Activated naive CD4-positive, alpha-beta T cell treated with anti-CD3 and anti-CD28 coated beads for 36 hours (primary cell): ENCODE measurements at regions of chr19 and their contacts with region 1.

Region 1: GRCh38 chr19:43503501-43504425 is 783 bp downstream of the PHLDB3 start:
- DNase-seq: peak; percentile 99
- H3K4me3 Mint-ChIP-seq: peak overlapping the region; percentile 97
- H3K27ac Mint-ChIP-seq: peak overlapping the region; percentile 92
- H3K4me1 Mint-ChIP-seq: peaks cover 29% of the 10 kb centered on the region
- H3K27me3 Mint-ChIP-seq: no peaks in the 10 kb centered on the region

Region 2: DNA sequence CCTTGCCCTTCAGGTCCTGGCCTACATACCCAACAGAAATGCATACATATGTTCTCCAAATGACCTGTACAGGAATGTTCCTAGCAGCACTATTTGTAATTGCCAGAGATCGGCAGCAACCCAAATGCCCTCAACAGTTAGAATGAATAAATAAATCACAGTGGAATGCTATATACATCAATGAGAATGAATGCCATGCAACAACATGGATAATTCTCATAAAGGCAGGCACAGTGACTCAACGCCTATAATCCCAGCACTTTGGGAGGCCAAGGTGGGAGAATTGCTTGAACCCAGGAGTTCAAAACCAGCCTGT is 70.4 kb before region 1 on chr19:
- CTCF ChIA-PET with region 1: interaction called, 11 read pairs
- intact Hi-C with region 1: loop called (anchors 1 kb)
- DNase-seq: no peak
- H3K4me3 Mint-ChIP-seq: no peak overlapping the region
- H3K27ac Mint-ChIP-seq: no peak overlapping the region
- H3K4me1 Mint-ChIP-seq: peaks cover 32% of the 10 kb centered on the region
- H3K27me3 Mint-ChIP-seq: no peaks in the 10 kb centered on the region

Region 3: GRCh38 chr19:43463381-43464136 is 40.2 kb before region 1 on chr19:
- CTCF ChIA-PET with region 1: interaction called, 3 read pairs
- intact Hi-C with region 1: loop called (anchors 1 kb)
- DNase-seq: peak; percentile 100
- H3K4me3 Mint-ChIP-seq: peak overlapping the region; percentile 94
- H3K27ac Mint-ChIP-seq: peak overlapping the region; percentile 86
- H3K4me1 Mint-ChIP-seq: peaks cover 37% of the 10 kb centered on the region
- H3K27me3 Mint-ChIP-seq: no peaks in the 10 kb centered on the region

Region 4: DNA sequence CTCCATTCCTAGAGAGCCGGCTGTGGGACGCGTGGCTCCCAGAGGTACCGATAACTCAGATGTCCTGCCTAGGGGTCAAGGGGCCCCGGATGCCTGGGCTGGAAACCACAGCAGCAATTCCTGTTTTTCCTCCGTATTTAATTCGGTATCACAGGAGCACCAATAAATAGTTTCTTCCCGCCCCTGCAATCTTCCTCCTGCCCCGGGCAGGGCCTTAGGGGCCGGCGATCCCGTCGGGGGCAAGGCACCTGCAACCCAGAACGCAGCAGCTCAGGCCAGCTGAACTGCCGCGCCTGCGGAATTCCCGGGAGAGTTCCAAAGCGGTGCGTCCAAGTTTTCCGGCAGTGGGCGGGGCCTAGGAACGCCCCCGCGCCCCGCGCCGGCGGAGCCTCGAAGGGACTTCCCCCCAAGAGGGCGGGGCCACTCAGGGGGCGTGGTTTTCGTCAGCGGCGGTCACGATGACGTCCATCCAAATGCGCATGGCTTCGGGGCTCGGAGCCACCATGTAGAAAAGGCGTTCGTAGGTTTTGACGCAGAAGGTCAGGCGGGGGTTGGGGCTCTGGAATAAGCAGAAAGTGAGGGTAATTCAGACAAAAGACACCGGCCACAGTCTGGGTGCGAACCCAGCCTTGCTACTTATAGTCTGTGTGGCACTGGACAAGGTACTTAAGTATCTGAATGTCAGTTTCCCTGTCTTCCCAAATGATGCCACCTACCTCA is 28.6 kb before region 1 on chr19:
- CTCF ChIA-PET with region 1: interaction called, 3 read pairs
- intact Hi-C with region 1: loop called (anchors 1 kb)
- DNase-seq: peak; percentile 97
- H3K4me3 Mint-ChIP-seq: peak overlapping the region; percentile 75
- H3K27ac Mint-ChIP-seq: peak overlapping the region; percentile 86
- H3K4me1 Mint-ChIP-seq: peaks cover 46% of the 10 kb centered on the region
- H3K27me3 Mint-ChIP-seq: no peaks in the 10 kb centered on the region

Region 5: GRCh38 chr19:43519436-43520088 is 15.8 kb after region 1 on chr19:
- CTCF ChIA-PET with region 1: interaction called, 11 read pairs
- intact Hi-C with region 1: loop called (anchors 1 kb)
- DNase-seq: peak; percentile 89
- H3K4me3 Mint-ChIP-seq: no peak overlapping the region
- H3K27ac Mint-ChIP-seq: peak overlapping the region; percentile 48
- H3K4me1 Mint-ChIP-seq: peaks cover 12% of the 10 kb centered on the region
- H3K27me3 Mint-ChIP-seq: no peaks in the 10 kb centered on the region

Region 6: DNA sequence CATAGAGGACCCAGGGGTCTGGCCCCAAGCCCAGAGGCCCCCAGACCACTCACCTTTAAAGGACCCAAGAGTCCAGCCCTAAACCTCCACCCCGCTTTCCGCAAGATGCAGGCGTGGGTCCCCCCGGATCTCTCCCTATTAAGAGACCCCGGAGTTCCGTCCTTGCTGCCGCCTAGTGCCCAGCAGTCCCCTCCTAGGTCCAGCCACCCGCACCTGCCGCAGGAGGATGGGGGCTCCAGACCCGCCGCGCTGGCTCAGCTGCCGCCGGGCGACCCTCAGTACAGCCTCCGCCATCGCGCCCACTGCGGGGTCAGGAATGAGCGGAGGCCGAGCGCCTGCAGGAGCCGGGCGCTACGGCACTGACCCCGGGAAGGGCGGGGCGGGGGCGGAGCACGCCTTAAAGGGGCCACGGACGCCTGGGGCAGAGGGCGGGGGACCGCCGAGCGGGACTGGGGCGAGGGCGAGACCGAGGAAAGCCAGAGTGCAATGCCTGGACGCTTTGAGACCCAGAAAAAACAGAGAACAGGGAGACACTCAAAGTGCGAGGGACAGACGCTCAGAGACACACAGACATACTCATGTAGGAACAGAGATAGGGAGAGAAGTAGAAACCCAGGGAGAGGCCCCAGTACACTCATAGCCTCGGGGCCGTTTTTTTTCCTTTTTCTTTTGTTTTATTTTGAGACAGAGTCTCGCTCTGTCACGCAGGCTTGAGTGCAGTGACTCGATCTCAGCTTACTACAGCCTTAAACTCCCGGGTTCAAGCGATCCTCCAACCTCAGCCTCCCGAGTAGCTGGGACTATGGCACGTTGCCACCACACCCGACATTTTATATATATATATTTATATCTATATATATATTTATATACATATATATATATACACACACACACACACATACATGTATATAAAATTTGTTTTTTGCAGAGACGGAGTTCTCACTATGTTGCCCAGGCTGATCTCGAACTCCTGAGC is 23.4 kb after region 1 on chr19 and contains the start of gene ETHE1:
- CTCF ChIA-PET with region 1: interaction called, 4 read pairs
- intact Hi-C with region 1: loop called (anchors 2 kb)
- DNase-seq: peak; percentile 73
- H3K4me3 Mint-ChIP-seq: peak within 1 kb of the TSS; percentile 97
- H3K27ac Mint-ChIP-seq: peak within 1 kb of the TSS; percentile 96
- H3K4me1 Mint-ChIP-seq: peaks cover 22% of the 10 kb centered on the region
- H3K27me3 Mint-ChIP-seq: no peaks in the 10 kb centered on the region
- total RNA-seq, gene ETHE1: 62.1 to 64.4 TPM

Region 7: DNA sequence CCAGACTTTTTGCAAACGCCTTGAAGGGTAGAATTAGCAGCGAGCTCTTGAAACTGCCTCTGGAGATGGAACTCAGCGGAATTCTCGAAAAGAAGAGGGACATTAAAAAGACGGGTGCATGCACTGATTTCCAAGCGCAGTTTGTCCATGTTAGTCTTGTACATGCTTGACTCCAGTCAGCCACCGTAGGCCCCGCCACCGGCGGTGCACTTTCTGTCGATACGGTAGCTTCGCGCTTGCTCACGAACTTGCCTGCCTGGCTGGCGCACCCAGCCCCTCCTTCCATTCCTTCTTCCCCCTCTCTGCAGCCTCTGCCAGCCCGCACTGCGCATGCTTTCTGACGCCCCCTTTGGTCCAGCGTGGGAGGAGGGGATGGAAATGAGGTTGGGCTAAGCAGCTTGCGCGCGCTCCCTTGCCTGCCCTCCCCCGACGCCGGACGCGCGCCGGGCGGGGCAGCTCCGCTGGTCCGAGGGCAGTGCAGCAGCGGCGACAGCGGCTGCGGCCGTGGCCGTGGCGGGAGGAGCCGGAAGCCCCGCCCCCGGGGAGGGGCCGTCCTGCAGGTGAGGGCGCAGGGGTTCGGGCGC is 29.3 kb after region 1 on chr19 and contains the start of gene ZNF575:
- CTCF ChIA-PET with region 1: interaction called, 3 read pairs
- intact Hi-C with region 1: loop called (anchors 1 kb)
- DNase-seq: peak; percentile 92
- H3K4me3 Mint-ChIP-seq: peak within 1 kb of the TSS; percentile 80
- H3K27ac Mint-ChIP-seq: peak within 1 kb of the TSS; percentile 88
- H3K4me1 Mint-ChIP-seq: peaks cover 19% of the 10 kb centered on the region
- H3K27me3 Mint-ChIP-seq: no peaks in the 10 kb centered on the region
- total RNA-seq, gene ZNF575: 3.1 to 5.2 TPM